ENCODE measurements at regions of chr6 and their contacts with region 1.

Region 1: GRCh38 chr6:134373282-134373922 is 55.5 kb upstream of the SGK1 start:
- DNase-seq: peak; percentile 78
- H3K4me3 Mint-ChIP-seq: peak overlapping the region; percentile 30
- H3K27ac Mint-ChIP-seq: peak overlapping the region; percentile 93
- H3K4me1 Mint-ChIP-seq: peaks cover 32% of the 10 kb centered on the region
- H3K27me3 Mint-ChIP-seq: no peaks in the 10 kb centered on the region
- CTCF ChIP-seq: no peak

Region 2: DNA sequence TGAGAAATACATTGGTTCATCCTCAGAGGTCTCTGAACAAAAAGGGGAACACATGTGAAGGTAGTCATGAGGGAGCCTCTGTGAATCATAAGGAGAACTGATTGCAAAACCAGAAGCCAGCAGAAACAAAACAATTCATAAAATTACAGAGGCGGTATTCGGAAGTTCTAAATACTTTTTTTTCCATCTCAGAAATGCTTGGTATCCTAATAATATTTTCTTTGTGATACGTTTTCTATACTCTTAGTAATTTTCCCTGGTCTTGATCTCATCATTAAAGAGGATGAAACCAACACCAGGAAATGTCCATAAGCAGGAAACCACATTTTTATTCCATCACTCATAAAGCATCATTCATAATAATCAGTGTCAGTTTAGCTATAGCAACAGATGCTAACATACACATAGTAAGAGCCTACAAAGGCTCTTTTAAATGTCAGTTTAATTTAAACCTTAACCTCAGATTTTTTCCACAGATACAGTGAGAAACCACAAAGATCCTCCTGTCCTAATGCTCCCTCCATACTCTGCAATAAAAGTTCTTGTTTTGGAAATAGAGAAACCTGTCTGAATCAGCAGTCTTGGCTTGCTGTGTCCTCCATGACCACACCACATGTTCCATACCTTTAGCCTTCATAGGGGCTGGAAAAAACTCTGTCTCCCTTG is 84.7 kb before region 1 on chr6:
- CTCF ChIA-PET with region 1: no interaction called
- POLR2A ChIA-PET with region 1: interaction called, 4 read pairs
- intact Hi-C with region 1: loop called (anchors 5 kb)
- DNase-seq: peak; percentile 75
- H3K4me3 Mint-ChIP-seq: no peak overlapping the region
- H3K27ac Mint-ChIP-seq: peak overlapping the region; percentile 96
- H3K4me1 Mint-ChIP-seq: peaks cover 16% of the 10 kb centered on the region
- H3K27me3 Mint-ChIP-seq: no peaks in the 10 kb centered on the region
- CTCF ChIP-seq: no peak